Body of pancreas (tissue), 4 donors: ENCODE measurements at regions of chr17 and their contacts with region 1.

Region 1: GRCh38 chr17:78421484-78422266 is 43.2 kb downstream of the PGS1 start:
- DNase-seq: peak; percentile 75 to 81 (median 79)
- ATAC-seq: peak; percentile 84
- H3K4me3 ChIP-seq: no peak overlapping the region
- H3K27ac ChIP-seq: no peak overlapping the region
- H3K4me1 ChIP-seq: no peaks in the 10 kb centered on the region
- H3K27me3 ChIP-seq: no peaks in the 10 kb centered on the region
- CTCF ChIP-seq: peak; percentile 91 to 99 (median 96)
- POLR2A ChIP-seq: no peak

Region 2: GRCh38 chr17:78258323-78259191 is 163.1 kb before region 1 on chr17:
- intact Hi-C with region 1: no loop called
- DNase-seq: peak in 1 of 4 donors; percentile 57
- ATAC-seq: no peak
- H3K4me3 ChIP-seq: no peak overlapping the region
- H3K27ac ChIP-seq: peak overlapping the region in 2 of 4 donors; percentile 9 to 59
- H3K4me1 ChIP-seq: peaks cover 5% of the 10 kb centered on the region
- H3K27me3 ChIP-seq: no peaks in the 10 kb centered on the region
- CTCF ChIP-seq: no peak
- POLR2A ChIP-seq: no peak

Region 3: DNA sequence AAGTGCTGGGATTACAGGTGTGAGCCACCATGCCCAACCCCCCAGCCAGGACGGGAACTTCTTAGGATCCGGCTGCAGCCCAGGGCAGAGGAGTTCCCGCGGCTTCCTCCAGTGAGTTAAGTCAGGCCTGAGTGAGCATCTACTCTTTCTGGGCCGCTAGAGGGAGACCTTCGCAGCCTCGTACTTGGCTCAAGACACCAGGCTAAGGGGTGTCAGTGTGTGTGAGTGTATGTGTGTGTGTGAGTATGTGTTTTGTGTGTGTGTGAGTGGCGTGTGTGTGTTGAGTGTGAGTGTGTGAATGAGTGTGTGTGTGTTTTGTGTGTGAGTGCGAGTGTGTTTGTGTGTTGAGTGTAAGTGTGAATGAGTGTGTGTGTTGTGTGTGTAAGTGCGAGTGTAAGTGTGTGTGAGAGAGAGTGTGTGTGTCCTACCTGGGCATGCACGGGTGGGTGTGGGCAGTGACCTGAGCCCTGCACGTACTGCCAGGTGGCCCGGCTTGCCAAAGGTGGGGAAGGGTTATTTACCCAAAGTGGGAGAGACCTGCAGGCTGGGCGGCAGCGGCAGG is 131.8 kb before region 1 on chr17:
- intact Hi-C with region 1: loop called (anchors 5 kb)
- DNase-seq: peak; percentile 78 to 86 (median 82)
- ATAC-seq: peak; percentile 96
- H3K4me3 ChIP-seq: no peak overlapping the region
- H3K27ac ChIP-seq: no peak overlapping the region
- H3K4me1 ChIP-seq: peaks cover 5% of the 10 kb centered on the region
- H3K27me3 ChIP-seq: no peaks in the 10 kb centered on the region
- CTCF ChIP-seq: peak; percentile 54 to 97 (median 77)
- POLR2A ChIP-seq: no peak

Region 4: GRCh38 chr17:78365561-78366108 is 56.0 kb before region 1 on chr17:
- intact Hi-C with region 1: loop called (anchors 5 kb)
- DNase-seq: no peak
- ATAC-seq: no peak
- H3K4me3 ChIP-seq: no peak overlapping the region
- H3K27ac ChIP-seq: no peak overlapping the region
- H3K4me1 ChIP-seq: peaks cover 5% of the 10 kb centered on the region
- H3K27me3 ChIP-seq: peaks cover 0 to 6% of the 10 kb centered on the region in 2 donors
- CTCF ChIP-seq: no peak
- POLR2A ChIP-seq: no peak

Region 5: GRCh38 chr17:78962345-78962983 is 540.8 kb after region 1 on chr17:
- intact Hi-C with region 1: no loop called
- DNase-seq: no peak
- ATAC-seq: peak; percentile 31
- H3K4me3 ChIP-seq: no peak overlapping the region
- H3K27ac ChIP-seq: no peak overlapping the region
- H3K4me1 ChIP-seq: no peaks in the 10 kb centered on the region
- H3K27me3 ChIP-seq: no peaks in the 10 kb centered on the region
- CTCF ChIP-seq: no peak
- POLR2A ChIP-seq: no peak